Esophagus squamous epithelium (tissue), 5 donors: ENCODE measurements at regions of chr6 and their contacts with region 1.

Region 1: GRCh38 chr6:112043032-112044007 is 10.6 kb upstream of the CCN6 start:
- DNase-seq: peak; percentile 45
- H3K4me3 ChIP-seq: peak overlapping the region; percentile 40 to 71 (median 64)
- H3K27ac ChIP-seq: peak overlapping the region; percentile 66 to 92 (median 85)
- H3K4me1 ChIP-seq: peaks cover 0 to 20% (median 2%) of the 10 kb centered on the region in 3 donors
- H3K27me3 ChIP-seq: no peaks in the 10 kb centered on the region
- CTCF ChIP-seq: peak; percentile 83 to 96 (median 93)
- POLR2A ChIP-seq: peak in 1 of 4 donors; percentile 40

Region 2: GRCh38 chr6:111709615-111710398 is 333.5 kb before region 1 on chr6:
- intact Hi-C with region 1: loop called (anchors 5 kb)
- DNase-seq: no peak
- H3K4me3 ChIP-seq: peak overlapping the region in 1 of 4 donors; percentile 54
- H3K27ac ChIP-seq: peak overlapping the region in 3 of 4 donors; percentile 8 to 40 (median 26)
- H3K4me1 ChIP-seq: peaks cover 0 to 52% (median 22%) of the 10 kb centered on the region in 3 donors
- H3K27me3 ChIP-seq: peaks cover 0 to 11% (median 0%) of the 10 kb centered on the region in 4 donors
- CTCF ChIP-seq: peak; percentile 68 to 92 (median 82)
- POLR2A ChIP-seq: no peak

Region 3: DNA sequence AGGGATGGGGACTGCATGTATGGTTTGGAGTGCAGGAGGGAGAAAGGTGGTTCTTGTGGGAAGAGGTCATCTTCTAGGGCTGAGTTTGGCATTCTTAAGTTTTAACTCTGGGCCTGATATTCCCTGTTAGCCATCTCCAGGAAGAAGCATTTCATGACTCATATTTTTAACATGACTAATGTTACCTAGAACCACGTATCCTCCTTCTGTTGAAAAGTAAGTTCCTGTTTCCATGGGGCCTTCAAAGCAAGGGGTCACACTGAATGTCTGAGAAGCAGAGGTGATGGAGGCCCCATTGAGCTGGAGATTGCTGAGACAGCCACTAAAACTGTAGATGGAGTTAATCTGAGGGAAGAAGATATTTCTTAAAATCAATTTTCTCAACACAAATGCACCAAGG is 74.2 kb after region 1 on chr6:
- intact Hi-C with region 1: no loop called
- DNase-seq: no peak
- H3K4me3 ChIP-seq: no peak overlapping the region
- H3K27ac ChIP-seq: no peak overlapping the region
- H3K4me1 ChIP-seq: no peaks in the 10 kb centered on the region
- H3K27me3 ChIP-seq: no peaks in the 10 kb centered on the region
- CTCF ChIP-seq: no peak
- POLR2A ChIP-seq: no peak